ENCODE measurements at regions of chr5 and their contacts with region 1.

Region 1: GRCh38 chr5:67003935-67004729 is 192.5 kb downstream of the CD180 start:
- DNase-seq: peak; percentile 76 to 95 (median 86)
- ATAC-seq: peak; percentile 81
- H3K4me3 ChIP-seq: peak overlapping the region; percentile 67
- H3K4me3 Mint-ChIP-seq: peak overlapping the region; percentile 94
- H3K27ac ChIP-seq: peak overlapping the region; percentile 69 to 77
- H3K27ac Mint-ChIP-seq: peak overlapping the region; percentile 96
- H3K4me1 ChIP-seq: peaks cover 23% of the 10 kb centered on the region
- H3K4me1 Mint-ChIP-seq: peaks cover 57% of the 10 kb centered on the region
- H3K27me3 ChIP-seq: no peaks in the 10 kb centered on the region
- H3K27me3 Mint-ChIP-seq: no peaks in the 10 kb centered on the region
- CTCF ChIP-seq: no peak

Region 2: DNA sequence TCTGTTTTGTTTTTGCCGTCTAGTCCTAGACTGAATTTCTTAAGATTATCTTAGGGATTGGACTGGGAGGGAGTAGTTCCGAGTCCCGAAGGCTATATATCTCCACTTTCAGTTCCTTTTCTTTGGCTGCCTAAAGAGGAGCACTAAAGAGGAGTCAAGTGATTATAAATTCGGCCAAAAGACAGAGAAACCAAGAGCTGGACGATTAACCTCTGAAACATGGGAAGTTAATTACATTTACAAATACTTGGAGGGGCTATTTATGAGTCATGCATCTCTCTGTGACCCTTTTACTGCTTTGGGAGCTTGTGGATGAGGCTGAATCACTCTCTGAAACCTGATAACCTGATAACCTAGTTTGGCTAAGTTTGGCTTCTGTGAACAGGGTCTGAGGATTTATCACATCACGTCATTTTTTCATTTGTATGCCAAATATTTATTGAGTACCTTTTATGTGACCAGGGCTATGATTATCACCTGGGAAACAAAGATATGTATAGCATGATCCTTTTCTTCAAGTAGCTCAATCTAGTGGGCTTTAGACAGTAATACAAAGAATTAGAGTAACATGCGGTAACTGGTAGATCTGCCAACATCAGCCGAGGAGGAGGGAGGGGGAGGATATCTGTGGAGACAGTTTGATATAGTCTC is 11.5 kb after region 1 on chr5:
- CTCF ChIA-PET with region 1: interaction called, 3 read pairs
- POLR2A ChIA-PET with region 1: interaction called, 25 read pairs
- intact Hi-C with region 1: no loop called
- DNase-seq: no peak
- ATAC-seq: no peak
- H3K4me3 ChIP-seq: no peak overlapping the region
- H3K4me3 Mint-ChIP-seq: no peak overlapping the region
- H3K27ac ChIP-seq: no peak overlapping the region
- H3K27ac Mint-ChIP-seq: no peak overlapping the region
- H3K4me1 ChIP-seq: peaks cover 9% of the 10 kb centered on the region
- H3K4me1 Mint-ChIP-seq: peaks cover 60% of the 10 kb centered on the region
- H3K27me3 ChIP-seq: no peaks in the 10 kb centered on the region
- H3K27me3 Mint-ChIP-seq: no peaks in the 10 kb centered on the region
- CTCF ChIP-seq: no peak

Region 3: DNA sequence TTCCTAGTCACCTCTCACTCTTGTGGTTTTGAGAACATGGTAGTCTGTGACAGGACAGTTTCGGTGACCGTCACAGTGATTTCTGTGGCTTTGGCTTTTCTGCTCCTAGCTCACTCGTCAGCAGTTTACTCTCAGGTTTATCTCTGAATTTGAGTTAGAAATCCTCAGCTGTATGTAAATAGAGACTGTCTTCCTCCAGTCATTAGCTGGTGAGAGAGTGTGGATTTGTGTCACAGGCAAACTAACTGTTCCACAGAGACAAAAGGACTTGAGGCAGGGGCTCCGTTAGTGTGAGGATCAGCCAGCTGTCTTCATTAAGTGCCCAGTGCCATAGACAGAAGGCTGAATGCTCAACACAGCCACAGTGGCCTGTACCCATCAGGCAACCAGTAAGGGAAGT is 61.1 kb after region 1 on chr5:
- CTCF ChIA-PET with region 1: no interaction called
- POLR2A ChIA-PET with region 1: interaction called, 3 read pairs
- intact Hi-C with region 1: loop called in 1 of 2 experiments (anchors 10 kb)
- DNase-seq: no peak
- ATAC-seq: no peak
- H3K4me3 ChIP-seq: no peak overlapping the region
- H3K4me3 Mint-ChIP-seq: no peak overlapping the region
- H3K27ac ChIP-seq: no peak overlapping the region
- H3K27ac Mint-ChIP-seq: no peak overlapping the region
- H3K4me1 ChIP-seq: peaks cover 4% of the 10 kb centered on the region
- H3K4me1 Mint-ChIP-seq: peaks cover 40% of the 10 kb centered on the region
- H3K27me3 ChIP-seq: no peaks in the 10 kb centered on the region
- H3K27me3 Mint-ChIP-seq: no peaks in the 10 kb centered on the region
- CTCF ChIP-seq: no peak

Region 4: GRCh38 chr5:67115246-67115645 is 111.1 kb after region 1 on chr5:
- CTCF ChIA-PET with region 1: no interaction called
- POLR2A ChIA-PET with region 1: no interaction called
- intact Hi-C with region 1: no loop called
- DNase-seq: no peak
- ATAC-seq: no peak
- H3K4me3 ChIP-seq: no peak overlapping the region
- H3K4me3 Mint-ChIP-seq: no peak overlapping the region
- H3K27ac ChIP-seq: no peak overlapping the region
- H3K27ac Mint-ChIP-seq: no peak overlapping the region
- H3K4me1 ChIP-seq: no peaks in the 10 kb centered on the region
- H3K4me1 Mint-ChIP-seq: no peaks in the 10 kb centered on the region
- H3K27me3 ChIP-seq: no peaks in the 10 kb centered on the region
- H3K27me3 Mint-ChIP-seq: no peaks in the 10 kb centered on the region
- CTCF ChIP-seq: no peak

Region 5: DNA sequence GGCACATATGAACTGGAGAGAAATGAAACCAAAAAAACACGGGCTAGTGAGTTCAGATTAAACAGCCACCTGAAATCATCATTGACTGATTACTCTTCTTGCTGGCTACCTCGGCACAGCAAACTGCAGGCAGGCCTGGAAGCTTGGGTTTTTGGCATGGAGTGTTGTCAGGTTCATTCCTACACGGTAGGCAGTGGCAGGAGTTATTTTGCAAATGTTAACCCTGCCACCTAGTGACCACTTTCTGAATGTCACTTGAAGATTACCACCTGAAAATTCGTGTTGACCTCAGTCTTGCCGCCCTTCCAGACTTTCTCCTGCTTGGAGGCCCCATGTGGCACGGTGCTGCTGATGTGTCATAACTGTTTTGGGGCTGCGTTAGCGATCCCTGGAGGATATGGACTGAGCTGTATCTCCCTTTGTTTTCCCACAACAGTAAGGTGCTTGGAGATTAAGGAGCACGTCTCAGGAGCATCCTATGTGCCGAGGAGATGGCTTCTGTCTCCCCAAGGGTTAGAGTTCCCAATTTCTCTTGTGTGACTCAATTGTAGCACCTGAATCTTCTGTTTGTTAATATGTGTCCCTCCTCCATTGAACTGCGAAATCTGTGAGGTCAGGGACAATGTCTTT is 205.1 kb after region 1 on chr5:
- CTCF ChIA-PET with region 1: no interaction called
- POLR2A ChIA-PET with region 1: interaction called, 6 read pairs
- intact Hi-C with region 1: loop called (anchors 2 to 5 kb)
- DNase-seq: peak; percentile 23 to 87 (median 50)
- ATAC-seq: peak; percentile 41
- H3K4me3 ChIP-seq: no peak overlapping the region
- H3K4me3 Mint-ChIP-seq: peak overlapping the region; percentile 35
- H3K27ac ChIP-seq: no peak overlapping the region
- H3K27ac Mint-ChIP-seq: peak overlapping the region; percentile 78
- H3K4me1 ChIP-seq: peaks cover 52% of the 10 kb centered on the region
- H3K4me1 Mint-ChIP-seq: peaks cover 61% of the 10 kb centered on the region
- H3K27me3 ChIP-seq: no peaks in the 10 kb centered on the region
- H3K27me3 Mint-ChIP-seq: no peaks in the 10 kb centered on the region
- CTCF ChIP-seq: peak; percentile 74

Region 6: GRCh38 chr5:68239487-68239886 is 1235.4 kb after region 1 on chr5:
- CTCF ChIA-PET with region 1: no interaction called
- POLR2A ChIA-PET with region 1: interaction called, 3 read pairs
- intact Hi-C with region 1: loop called in 1 of 2 experiments (anchors 10 kb)
- DNase-seq: peak; percentile 61 to 92 (median 74)
- ATAC-seq: peak; percentile 96
- H3K4me3 ChIP-seq: peak overlapping the region; percentile 2
- H3K4me3 Mint-ChIP-seq: peak overlapping the region; percentile 82
- H3K27ac ChIP-seq: peak overlapping the region; percentile 4 to 18
- H3K27ac Mint-ChIP-seq: peak overlapping the region; percentile 90
- H3K4me1 ChIP-seq: peaks cover 37% of the 10 kb centered on the region
- H3K4me1 Mint-ChIP-seq: peaks cover 93% of the 10 kb centered on the region
- H3K27me3 ChIP-seq: no peaks in the 10 kb centered on the region
- H3K27me3 Mint-ChIP-seq: no peaks in the 10 kb centered on the region
- CTCF ChIP-seq: no peak